ENCODE measurements at regions of chr18 and their contacts with region 1.

Region 1: GRCh38 chr18:26190506-26190905 is 35.7 kb upstream of the TAF4B start:
- DNase-seq: peak; percentile 37
- ATAC-seq: peak; percentile 95
- H3K4me3 Mint-ChIP-seq: peak overlapping the region; percentile 75
- H3K27ac Mint-ChIP-seq: peak overlapping the region; percentile 85
- H3K4me1 Mint-ChIP-seq: peaks cover 32% of the 10 kb centered on the region
- H3K27me3 Mint-ChIP-seq: no peaks in the 10 kb centered on the region
- CTCF ChIP-seq: no peak

Region 2: DNA sequence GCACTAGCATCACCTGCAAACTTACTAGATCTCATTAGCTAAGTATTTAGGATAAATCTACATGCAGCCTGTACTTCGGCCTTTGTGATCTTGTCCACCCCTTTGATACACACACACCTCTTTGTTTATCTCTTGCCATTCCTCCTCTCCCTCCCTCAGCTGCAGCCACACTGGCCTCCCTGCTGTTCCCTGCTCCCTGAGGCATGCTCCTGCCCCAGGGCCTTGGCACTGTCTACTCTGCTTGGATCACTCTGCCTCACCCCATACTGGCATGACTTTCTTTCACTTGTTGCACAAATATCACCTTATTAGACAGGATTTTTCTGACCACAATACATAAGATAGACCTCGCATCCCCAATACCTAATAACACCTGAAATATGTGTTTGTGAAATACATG is 13.2 kb after region 1 on chr18:
- CTCF ChIA-PET with region 1: no interaction called
- POLR2A ChIA-PET with region 1: interaction called, 14 read pairs
- intact Hi-C with region 1: no loop called
- DNase-seq: no peak
- ATAC-seq: no peak
- H3K4me3 Mint-ChIP-seq: no peak overlapping the region
- H3K27ac Mint-ChIP-seq: peak overlapping the region; percentile 0
- H3K4me1 Mint-ChIP-seq: peaks cover 3% of the 10 kb centered on the region
- H3K27me3 Mint-ChIP-seq: no peaks in the 10 kb centered on the region
- CTCF ChIP-seq: no peak

Region 3: DNA sequence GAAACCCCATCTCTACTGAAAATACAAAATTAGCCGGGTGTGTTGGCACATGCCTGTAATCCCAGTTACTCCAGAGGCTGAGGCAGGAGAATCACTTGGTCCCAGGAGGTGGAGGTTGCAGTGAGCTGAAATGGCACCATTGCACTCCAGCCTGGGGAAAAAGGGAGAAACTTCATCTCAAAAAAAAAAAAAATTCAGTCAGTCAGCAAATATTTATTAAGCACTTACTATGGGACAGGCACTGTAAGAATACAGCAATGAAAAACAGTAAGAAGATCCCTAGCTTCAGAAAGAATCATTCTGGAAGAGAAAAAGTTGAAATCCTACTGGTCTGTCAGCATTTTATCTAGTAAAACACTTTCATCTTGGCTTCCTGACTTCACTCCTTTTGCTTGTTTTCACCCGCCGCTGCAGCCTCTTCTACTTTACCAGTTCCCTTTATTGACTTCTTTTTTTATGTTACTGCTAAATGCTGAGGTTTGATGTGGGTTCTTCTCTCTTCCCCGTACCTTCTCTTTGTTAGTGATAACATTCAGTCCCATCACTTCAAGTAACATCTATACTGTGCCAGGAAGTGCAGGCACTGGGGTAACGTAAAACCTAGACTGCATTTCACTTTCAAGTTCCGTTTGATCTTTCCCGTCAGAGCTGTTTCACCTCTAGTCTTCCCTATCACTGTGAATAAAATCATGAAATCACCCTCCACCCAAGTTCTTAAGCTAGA is 24.9 kb after region 1 on chr18:
- CTCF ChIA-PET with region 1: interaction called, 3 read pairs
- POLR2A ChIA-PET with region 1: interaction called, 4 read pairs
- intact Hi-C with region 1: loop called (anchors 1 kb)
- DNase-seq: no peak
- ATAC-seq: peak; percentile 90
- H3K4me3 Mint-ChIP-seq: peak overlapping the region; percentile 82
- H3K27ac Mint-ChIP-seq: peak overlapping the region; percentile 91
- H3K4me1 Mint-ChIP-seq: peaks cover 19% of the 10 kb centered on the region
- H3K27me3 Mint-ChIP-seq: no peaks in the 10 kb centered on the region
- CTCF ChIP-seq: no peak

Region 4: GRCh38 chr18:26226229-26227005 is 35.9 kb after region 1 on chr18 and contains the start of gene TAF4B:
- CTCF ChIA-PET with region 1: no interaction called
- POLR2A ChIA-PET with region 1: interaction called, 11 read pairs
- intact Hi-C with region 1: loop called (anchors 1 kb)
- DNase-seq: peak; percentile 95
- ATAC-seq: peak; percentile 83
- H3K4me3 Mint-ChIP-seq: peak within 1 kb of the TSS; percentile 96
- H3K27ac Mint-ChIP-seq: peak within 1 kb of the TSS; percentile 97
- H3K4me1 Mint-ChIP-seq: peaks cover 22% of the 10 kb centered on the region
- H3K27me3 Mint-ChIP-seq: no peaks in the 10 kb centered on the region
- CTCF ChIP-seq: no peak
- total RNA-seq, gene TAF4B: 11.6 and 13.4 TPM in 2 replicates